Mammary epithelial cell (primary cell): ENCODE measurements at regions of chr3 and their contacts with region 1.

Region 1: GRCh38 chr3:81666493-81667121 is 94.8 kb downstream of the GBE1 start:
- DNase-seq: no peak
- H3K4me3 ChIP-seq: no peak overlapping the region
- H3K27ac ChIP-seq: no peak overlapping the region
- H3K4me1 ChIP-seq: no peaks in the 10 kb centered on the region
- H3K27me3 ChIP-seq: no peaks in the 10 kb centered on the region
- CTCF ChIP-seq: peak; percentile 56 to 71

Region 2: GRCh38 chr3:81643721-81644120 is 22.9 kb before region 1 on chr3:
- CTCF ChIA-PET with region 1: no interaction called
- dilution Hi-C with region 1: no loop called
- in situ Hi-C with region 1: no loop called
- intact Hi-C with region 1: no loop called
- DNase-seq: no peak
- H3K4me3 ChIP-seq: no peak overlapping the region
- H3K27ac ChIP-seq: no peak overlapping the region
- H3K4me1 ChIP-seq: no peaks in the 10 kb centered on the region
- H3K27me3 ChIP-seq: no peaks in the 10 kb centered on the region
- CTCF ChIP-seq: peak; percentile 25 to 39

Region 3: DNA sequence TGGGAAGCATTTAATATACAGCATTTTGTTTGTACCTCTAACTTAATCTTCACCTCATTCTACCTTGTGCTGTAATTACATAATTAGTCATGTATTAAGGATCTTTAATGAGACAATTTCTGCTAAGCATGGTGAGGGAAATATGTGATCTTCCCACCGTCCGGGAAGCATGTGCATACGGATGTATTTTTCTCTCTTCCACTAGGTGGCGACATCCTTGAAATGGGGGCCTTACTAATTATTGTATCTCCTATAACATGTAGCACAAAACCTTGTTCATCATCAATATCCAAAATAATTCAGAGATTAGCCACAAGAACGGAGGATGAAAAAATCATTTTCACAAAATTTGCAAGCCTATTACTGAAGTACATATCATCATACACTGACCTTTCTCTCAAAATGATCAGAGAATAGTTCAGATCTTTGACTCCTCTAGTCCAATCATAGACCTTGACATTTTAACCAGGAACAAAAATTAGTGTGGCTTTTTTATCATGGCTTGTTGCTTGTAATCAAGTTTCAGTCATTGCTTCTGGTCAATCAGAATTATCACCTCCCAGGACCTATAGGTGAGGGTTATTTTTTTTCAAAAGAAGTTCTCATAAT is 243.7 kb after region 1 on chr3:
- CTCF ChIA-PET with region 1: no interaction called
- dilution Hi-C with region 1: no loop called
- in situ Hi-C with region 1: no loop called
- intact Hi-C with region 1: loop called (anchors 2 kb)
- DNase-seq: peak; percentile 24
- H3K4me3 ChIP-seq: no peak overlapping the region
- H3K27ac ChIP-seq: no peak overlapping the region
- H3K4me1 ChIP-seq: no peaks in the 10 kb centered on the region
- H3K27me3 ChIP-seq: no peaks in the 10 kb centered on the region
- CTCF ChIP-seq: peak; percentile 69 to 75

Region 4: GRCh38 chr3:82100378-82100777 is 433.8 kb after region 1 on chr3:
- CTCF ChIA-PET with region 1: no interaction called
- dilution Hi-C with region 1: no loop called
- in situ Hi-C with region 1: loop called in 1 of 2 experiments (anchors 25 kb)
- intact Hi-C with region 1: no loop called
- DNase-seq: peak; percentile 79
- H3K4me3 ChIP-seq: peak overlapping the region in 1 of 3 experiments; percentile 22
- H3K27ac ChIP-seq: no peak overlapping the region
- H3K4me1 ChIP-seq: peaks cover 11% of the 10 kb centered on the region
- H3K27me3 ChIP-seq: no peaks in the 10 kb centered on the region
- CTCF ChIP-seq: no peak